ENCODE measurements at regions of chr15 and their contacts with region 1.

Region 1: DNA sequence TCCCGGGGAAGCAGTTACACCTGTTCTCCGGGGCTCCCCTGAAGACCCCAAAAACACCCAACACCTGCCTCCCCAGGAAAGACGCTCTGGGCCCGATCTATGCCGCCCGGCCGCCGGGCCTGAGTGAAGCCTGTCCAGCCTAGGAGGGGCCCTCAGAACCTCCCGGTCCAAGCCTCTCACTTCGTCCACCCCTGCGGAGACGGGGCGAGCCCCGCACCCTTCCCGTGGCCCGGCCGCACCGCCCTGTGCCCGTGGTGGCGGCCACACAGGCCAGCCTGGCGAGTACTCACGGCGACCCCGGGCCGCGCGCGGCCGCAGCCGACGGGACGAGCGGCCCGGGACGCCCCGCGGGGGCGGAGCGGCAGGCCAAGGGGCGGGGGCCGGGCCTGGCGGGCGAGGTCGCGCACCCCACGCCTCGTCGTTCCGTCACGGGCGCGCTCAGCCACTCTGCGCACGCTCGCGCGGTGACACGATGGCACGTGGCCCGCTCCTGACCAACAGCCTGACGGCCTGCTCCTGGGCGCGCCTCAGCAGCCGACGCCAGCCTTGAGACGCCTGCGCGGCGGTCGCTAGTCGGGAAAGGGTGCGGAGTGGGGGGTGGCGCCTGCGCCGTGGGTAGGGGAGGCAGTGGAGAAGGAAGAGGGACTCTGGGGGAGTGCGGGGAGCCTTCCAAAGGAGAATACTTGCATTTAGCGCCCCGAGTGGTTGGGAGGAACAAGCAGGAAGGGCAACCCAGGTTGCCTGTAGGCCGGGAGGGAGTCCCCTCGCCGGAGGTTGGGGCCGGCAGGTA is at the start of gene PARP6:
- DNase-seq: peak; percentile 99
- ATAC-seq: peak; percentile 98
- H3K4me3 Mint-ChIP-seq: peak within 1 kb of the TSS; percentile 80
- H3K27ac Mint-ChIP-seq: peak within 1 kb of the TSS; percentile 92
- H3K4me1 Mint-ChIP-seq: peaks cover 35% of the 10 kb centered on the region
- H3K27me3 Mint-ChIP-seq: no peaks in the 10 kb centered on the region
- total RNA-seq, gene PARP6: 41.4 to 58.2 TPM

Region 2: GRCh38 chr15:72117486-72118399 is 154.7 kb before region 1 on chr15 and contains the start of gene MYO9A:
- CTCF ChIA-PET with region 1: no interaction called
- POLR2A ChIA-PET with region 1: no interaction called
- intact Hi-C with region 1: loop called (anchors 1 to 5 kb)
- DNase-seq: peak; percentile 100
- ATAC-seq: peak; percentile 73
- H3K4me3 Mint-ChIP-seq: peak within 1 kb of the TSS; percentile 98
- H3K27ac Mint-ChIP-seq: peak within 1 kb of the TSS; percentile 96
- H3K4me1 Mint-ChIP-seq: peaks cover 40% of the 10 kb centered on the region
- H3K27me3 Mint-ChIP-seq: no peaks in the 10 kb centered on the region
- total RNA-seq, gene MYO9A: 19.0 to 20.3 TPM

Region 3: GRCh38 chr15:72136170-72137051 is 136.0 kb before region 1 on chr15:
- CTCF ChIA-PET with region 1: no interaction called
- POLR2A ChIA-PET with region 1: no interaction called
- intact Hi-C with region 1: no loop called
- DNase-seq: no peak
- ATAC-seq: no peak
- H3K4me3 Mint-ChIP-seq: no peak overlapping the region
- H3K27ac Mint-ChIP-seq: no peak overlapping the region
- H3K4me1 Mint-ChIP-seq: no peaks in the 10 kb centered on the region
- H3K27me3 Mint-ChIP-seq: no peaks in the 10 kb centered on the region

Region 4: DNA sequence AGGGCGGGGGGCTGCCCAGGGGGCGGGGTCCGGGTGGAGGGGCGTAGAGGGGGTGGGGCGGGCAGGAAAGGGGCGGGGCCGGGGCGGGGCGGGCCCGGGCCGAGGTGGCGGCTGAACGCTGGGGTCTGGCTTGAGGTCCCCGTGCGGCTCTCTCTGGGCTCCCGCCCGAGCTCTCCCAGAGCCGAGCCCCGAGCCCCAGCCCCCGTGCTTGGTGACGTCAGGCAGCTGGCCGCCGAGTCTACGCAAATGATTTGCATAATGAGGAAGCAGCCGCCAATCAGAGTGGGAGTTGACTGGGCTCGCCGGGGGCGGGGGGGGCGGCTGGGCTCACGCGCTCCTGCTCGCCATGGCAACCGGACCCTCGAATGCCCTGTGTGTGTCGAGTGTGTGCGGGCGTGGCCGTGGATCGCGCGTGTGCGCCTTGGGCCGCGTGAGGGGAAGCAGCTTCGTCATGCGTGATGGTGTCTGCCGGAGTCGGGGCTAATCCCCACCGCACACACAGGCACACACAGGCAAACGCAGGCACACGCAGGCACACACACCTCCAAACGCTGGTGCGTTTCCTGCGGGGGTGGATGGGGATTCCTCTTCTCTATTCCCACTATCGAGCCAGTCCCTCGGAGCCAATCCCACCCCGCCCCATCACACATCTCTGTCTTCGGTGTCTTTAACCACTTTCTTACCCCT is 47.7 kb after region 1 on chr15 and contains the start of gene CELF6:
- CTCF ChIA-PET with region 1: no interaction called
- POLR2A ChIA-PET with region 1: no interaction called
- intact Hi-C with region 1: loop called in 1 of 2 experiments (anchors 1 kb)
- DNase-seq: peak; percentile 84
- ATAC-seq: peak; percentile 78
- H3K4me3 Mint-ChIP-seq: peak within 1 kb of the TSS; percentile 71
- H3K27ac Mint-ChIP-seq: peak within 1 kb of the TSS; percentile 21
- H3K4me1 Mint-ChIP-seq: peaks cover 15% of the 10 kb centered on the region
- H3K27me3 Mint-ChIP-seq: peaks cover 8% of the 10 kb centered on the region
- total RNA-seq, gene CELF6: 0.37 to 0.40 TPM

Region 5: GRCh38 chr15:73210630-73211029 is 938.2 kb after region 1 on chr15:
- CTCF ChIA-PET with region 1: no interaction called
- POLR2A ChIA-PET with region 1: no interaction called
- intact Hi-C with region 1: no loop called
- DNase-seq: no peak
- ATAC-seq: no peak
- H3K4me3 Mint-ChIP-seq: no peak overlapping the region
- H3K27ac Mint-ChIP-seq: no peak overlapping the region
- H3K4me1 Mint-ChIP-seq: no peaks in the 10 kb centered on the region
- H3K27me3 Mint-ChIP-seq: no peaks in the 10 kb centered on the region

Measured in activated CD4-positive, alpha-beta T cell treated with anti-CD3 and anti-CD28 coated beads for 36 hours (primary cell).